Naive thymus-derived CD4-positive, alpha-beta T cell (primary cell): ENCODE measurements at regions of chr16 and their contacts with region 1.

Region 1: DNA sequence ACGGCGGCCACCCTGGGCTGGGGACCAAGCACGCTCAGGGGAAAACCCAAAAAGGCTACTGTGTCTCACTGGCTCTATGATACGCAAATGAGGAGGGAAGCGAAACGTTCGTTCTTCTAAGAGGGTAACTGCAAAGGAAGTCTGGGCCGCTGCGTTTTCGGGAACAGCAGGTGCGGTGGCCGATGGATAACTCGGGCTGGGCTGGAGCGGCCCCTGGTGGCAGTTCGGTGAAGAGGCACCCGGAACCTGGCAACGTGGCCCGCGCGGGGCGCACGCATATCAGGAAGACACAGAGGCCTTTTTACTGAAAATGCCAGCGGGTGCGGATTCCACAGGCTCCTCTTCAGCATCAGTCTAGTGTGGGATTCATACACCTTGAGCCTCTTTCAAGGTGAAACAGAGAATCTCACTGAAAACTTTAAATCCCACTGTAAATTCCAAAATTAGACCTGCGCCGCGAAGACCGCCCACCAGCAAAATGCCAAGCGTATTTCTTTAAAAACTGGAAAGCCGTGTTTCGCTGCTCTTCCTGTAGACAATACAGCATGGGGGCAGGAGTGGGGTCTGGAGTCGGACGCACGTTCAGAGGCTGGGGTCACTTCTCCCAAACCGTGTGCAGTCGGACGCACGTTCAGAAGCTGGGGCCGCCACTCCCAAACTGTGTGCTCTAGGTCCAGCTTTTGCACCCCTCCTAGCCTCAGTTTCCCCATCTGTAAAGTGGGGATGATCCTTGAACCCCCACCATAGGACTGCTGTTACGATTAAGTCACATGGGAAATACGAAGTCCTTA is 44.4 kb upstream of the METTL9 start:
- DNase-seq: peak; percentile 77 to 94 (median 90)
- ATAC-seq: peak; percentile 97
- H3K4me3 ChIP-seq: peak overlapping the region; percentile 36
- H3K4me3 Mint-ChIP-seq: peak overlapping the region; percentile 34 to 76 (median 64)
- H3K27ac ChIP-seq: no peak overlapping the region
- H3K27ac Mint-ChIP-seq: peak overlapping the region in 5 of 9 donors; percentile 20 to 58 (median 50)
- H3K4me1 ChIP-seq: peaks cover 6 to 7% of the 10 kb centered on the region in 2 donors
- H3K4me1 Mint-ChIP-seq: peaks cover 0 to 14% (median 9%) of the 10 kb centered on the region in 7 donors
- H3K27me3 ChIP-seq: no peaks in the 10 kb centered on the region
- H3K27me3 Mint-ChIP-seq: peaks cover 0 to 5% (median 5%) of the 10 kb centered on the region in 5 donors

Region 2: DNA sequence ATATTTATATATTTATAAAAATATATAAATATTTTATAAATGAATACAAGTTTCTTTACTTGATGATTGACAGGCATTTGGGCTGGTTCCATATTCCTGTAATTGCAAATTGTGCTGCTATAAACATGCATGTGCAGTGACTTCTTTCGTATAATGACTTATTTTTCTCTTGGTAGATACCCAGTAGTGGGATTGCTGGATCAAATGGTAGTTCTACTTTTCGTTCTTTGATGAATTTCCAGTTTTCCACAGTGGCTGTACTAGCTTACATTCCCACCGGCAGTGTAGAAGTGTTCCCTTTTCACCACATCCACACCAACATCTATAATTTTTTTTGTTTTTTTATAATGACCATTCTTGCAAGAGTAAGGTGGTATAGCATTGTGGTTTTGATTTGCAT is 986.6 kb before region 1 on chr16:
- CTCF ChIA-PET with region 1: no interaction called
- POLR2A ChIA-PET with region 1: no interaction called
- intact Hi-C with region 1: no loop called
- DNase-seq: no peak
- ATAC-seq: no peak
- H3K4me3 ChIP-seq: no peak overlapping the region
- H3K4me3 Mint-ChIP-seq: no peak overlapping the region
- H3K27ac ChIP-seq: no peak overlapping the region
- H3K27ac Mint-ChIP-seq: no peak overlapping the region
- H3K4me1 ChIP-seq: no peaks in the 10 kb centered on the region
- H3K4me1 Mint-ChIP-seq: no peaks in the 10 kb centered on the region
- H3K27me3 ChIP-seq: no peaks in the 10 kb centered on the region
- H3K27me3 Mint-ChIP-seq: peaks cover 0 to 12% (median 6%) of the 10 kb centered on the region in 5 donors

Region 3: GRCh38 chr16:21184834-21185233 is 370.2 kb before region 1 on chr16:
- CTCF ChIA-PET with region 1: no interaction called
- POLR2A ChIA-PET with region 1: no interaction called
- intact Hi-C with region 1: loop called (anchors 1 to 5 kb)
- DNase-seq: no peak
- ATAC-seq: peak; percentile 18
- H3K4me3 ChIP-seq: no peak overlapping the region
- H3K4me3 Mint-ChIP-seq: no peak overlapping the region
- H3K27ac ChIP-seq: no peak overlapping the region
- H3K27ac Mint-ChIP-seq: no peak overlapping the region
- H3K4me1 ChIP-seq: no peaks in the 10 kb centered on the region
- H3K4me1 Mint-ChIP-seq: peaks cover 0 to 5% (median 4%) of the 10 kb centered on the region in 7 donors
- H3K27me3 ChIP-seq: no peaks in the 10 kb centered on the region
- H3K27me3 Mint-ChIP-seq: peaks cover 0 to 3% (median 0%) of the 10 kb centered on the region in 5 donors

Region 4: DNA sequence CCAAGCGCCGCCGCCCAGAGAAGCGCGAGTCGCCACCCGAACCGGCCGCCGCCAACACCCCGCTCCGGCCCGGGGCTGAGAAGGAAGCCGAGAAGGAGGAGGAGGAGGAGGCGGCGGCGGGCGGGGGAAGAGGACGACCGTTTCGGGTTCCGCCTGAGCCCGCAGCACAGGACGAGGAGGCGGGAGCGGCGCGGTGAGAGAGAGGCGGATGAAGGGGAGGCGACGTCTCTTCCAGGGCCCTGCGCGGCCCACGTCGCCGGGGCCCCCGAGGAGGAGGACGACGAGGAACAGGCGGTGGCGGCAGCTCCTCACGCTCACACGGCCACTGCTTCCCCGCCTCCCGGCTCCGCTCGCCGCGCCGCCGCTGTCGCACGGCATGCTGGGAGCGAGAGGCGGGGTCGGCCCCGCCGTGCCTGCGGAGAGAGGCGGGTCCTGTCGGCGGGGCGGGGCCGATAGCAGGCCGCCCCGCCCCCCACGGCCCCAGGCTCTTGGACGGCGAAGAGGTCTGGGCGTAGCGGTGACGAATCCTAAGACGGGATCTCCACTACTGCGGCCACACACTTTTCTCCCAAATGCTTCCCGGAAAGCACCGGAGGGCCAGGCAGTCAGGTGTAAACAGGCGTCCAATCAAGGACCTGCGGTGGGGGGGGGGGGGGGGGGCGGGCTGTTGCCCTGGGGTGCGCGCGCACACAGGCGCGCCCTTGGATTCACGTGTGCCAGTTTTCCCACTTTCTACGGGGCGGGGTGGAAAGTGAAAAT is 52.9 kb before region 1 on chr16:
- CTCF ChIA-PET with region 1: no interaction called
- POLR2A ChIA-PET with region 1: no interaction called
- intact Hi-C with region 1: loop called in 1 of 2 experiments (anchors 10 kb)
- DNase-seq: peak; percentile 85 to 99 (median 96)
- ATAC-seq: peak; percentile 90
- H3K4me3 ChIP-seq: peak overlapping the region; percentile 91
- H3K4me3 Mint-ChIP-seq: peak overlapping the region; percentile 76 to 94 (median 86)
- H3K27ac ChIP-seq: peak overlapping the region; percentile 92
- H3K27ac Mint-ChIP-seq: peak overlapping the region; percentile 71 to 93 (median 89)
- H3K4me1 ChIP-seq: peaks cover 4 to 7% of the 10 kb centered on the region in 2 donors
- H3K4me1 Mint-ChIP-seq: peaks cover 11 to 26% (median 16%) of the 10 kb centered on the region in 7 donors
- H3K27me3 ChIP-seq: no peaks in the 10 kb centered on the region
- H3K27me3 Mint-ChIP-seq: no peaks in the 10 kb centered on the region

Region 5: GRCh38 chr16:21523411-21524067 is 31.5 kb before region 1 on chr16:
- CTCF ChIA-PET with region 1: no interaction called
- POLR2A ChIA-PET with region 1: no interaction called
- intact Hi-C with region 1: loop called in 1 of 2 experiments (anchors 1 kb)
- DNase-seq: no peak
- ATAC-seq: no peak
- H3K4me3 ChIP-seq: no peak overlapping the region
- H3K4me3 Mint-ChIP-seq: peak overlapping the region in 2 of 10 donors; percentile 29 to 56
- H3K27ac ChIP-seq: no peak overlapping the region
- H3K27ac Mint-ChIP-seq: no peak overlapping the region
- H3K4me1 ChIP-seq: no peaks in the 10 kb centered on the region
- H3K4me1 Mint-ChIP-seq: peaks cover 2 to 9% (median 6%) of the 10 kb centered on the region in 7 donors
- H3K27me3 ChIP-seq: no peaks in the 10 kb centered on the region
- H3K27me3 Mint-ChIP-seq: peaks cover 0 to 7% (median 0%) of the 10 kb centered on the region in 5 donors

Region 6: DNA sequence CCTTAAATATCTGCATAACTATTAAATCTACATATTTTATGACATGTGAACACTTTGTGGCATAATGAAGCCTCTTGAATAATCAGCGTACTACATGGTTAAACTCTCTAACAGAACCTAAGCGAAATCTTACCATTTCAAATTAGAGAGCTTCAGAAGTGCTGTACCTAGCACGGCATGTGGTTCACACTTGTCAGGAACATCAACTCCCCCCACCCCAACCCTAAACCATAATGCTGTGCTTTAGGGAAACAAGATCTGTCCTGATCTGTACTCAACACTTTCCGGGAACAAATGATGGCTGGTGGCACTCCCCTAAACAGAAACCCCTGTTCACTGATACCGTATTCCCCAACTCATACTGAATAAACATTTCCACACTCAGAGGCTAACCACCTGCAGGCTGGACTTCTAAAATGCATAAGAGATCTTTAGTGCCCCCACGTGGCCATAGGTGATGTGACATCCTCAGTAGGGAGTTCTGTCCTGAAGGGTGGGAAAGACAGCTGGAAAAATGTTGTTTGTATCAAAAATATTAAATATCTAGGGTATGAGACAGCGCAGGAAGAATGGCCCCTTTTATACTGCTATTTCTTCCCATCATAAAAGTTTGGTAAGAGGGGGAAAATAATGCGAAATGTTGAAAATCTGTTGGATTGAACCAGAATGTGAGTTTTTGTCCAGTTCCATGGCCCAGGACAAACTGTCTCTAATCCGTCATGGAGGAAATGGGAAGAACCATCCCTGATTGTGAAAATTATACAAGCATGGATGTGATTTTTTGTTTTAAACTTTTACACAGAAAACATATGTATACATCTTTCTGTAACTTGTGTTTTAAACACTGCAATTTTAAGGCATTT is 1505.7 kb after region 1 on chr16:
- CTCF ChIA-PET with region 1: interaction called, 6 read pairs
- POLR2A ChIA-PET with region 1: no interaction called
- intact Hi-C with region 1: loop called in 1 of 2 experiments (anchors 1 kb)
- DNase-seq: peak in 8 of 9 donors; percentile 9 to 48 (median 38)
- ATAC-seq: peak; percentile 74
- H3K4me3 ChIP-seq: no peak overlapping the region
- H3K4me3 Mint-ChIP-seq: no peak overlapping the region
- H3K27ac ChIP-seq: no peak overlapping the region
- H3K27ac Mint-ChIP-seq: no peak overlapping the region
- H3K4me1 ChIP-seq: no peaks in the 10 kb centered on the region
- H3K4me1 Mint-ChIP-seq: peaks cover 0 to 3% (median 0%) of the 10 kb centered on the region in 7 donors
- H3K27me3 ChIP-seq: no peaks in the 10 kb centered on the region
- H3K27me3 Mint-ChIP-seq: peaks cover 12 to 31% (median 16%) of the 10 kb centered on the region in 5 donors

Region 7: GRCh38 chr16:23435500-23435899 is 1880.5 kb after region 1 on chr16:
- CTCF ChIA-PET with region 1: no interaction called
- POLR2A ChIA-PET with region 1: no interaction called
- intact Hi-C with region 1: loop called in 1 of 2 experiments (anchors 10 kb)
- DNase-seq: peak; percentile 5 to 60 (median 48)
- ATAC-seq: peak; percentile 89
- H3K4me3 ChIP-seq: no peak overlapping the region
- H3K4me3 Mint-ChIP-seq: no peak overlapping the region
- H3K27ac ChIP-seq: no peak overlapping the region
- H3K27ac Mint-ChIP-seq: peak overlapping the region in 1 of 9 donors; percentile 53
- H3K4me1 ChIP-seq: no peaks in the 10 kb centered on the region
- H3K4me1 Mint-ChIP-seq: peaks cover 0 to 4% (median 0%) of the 10 kb centered on the region in 7 donors
- H3K27me3 ChIP-seq: no peaks in the 10 kb centered on the region
- H3K27me3 Mint-ChIP-seq: no peaks in the 10 kb centered on the region

Region 8: GRCh38 chr16:23510164-23510914 is 1955.3 kb after region 1 on chr16 and contains the start of gene GGA2:
- CTCF ChIA-PET with region 1: no interaction called
- POLR2A ChIA-PET with region 1: no interaction called
- intact Hi-C with region 1: no loop called
- DNase-seq: peak; percentile 61 to 84 (median 74)
- ATAC-seq: peak; percentile 96
- H3K4me3 ChIP-seq: peak within 1 kb of the TSS; percentile 73
- H3K4me3 Mint-ChIP-seq: peak within 1 kb of the TSS; percentile 86 to 99 (median 92)
- H3K27ac ChIP-seq: peak within 1 kb of the TSS; percentile 74
- H3K27ac Mint-ChIP-seq: peak within 1 kb of the TSS; percentile 78 to 94 (median 83)
- H3K4me1 ChIP-seq: peaks cover 36 to 50% of the 10 kb centered on the region in 2 donors
- H3K4me1 Mint-ChIP-seq: peaks cover 43 to 65% (median 56%) of the 10 kb centered on the region in 7 donors
- H3K27me3 ChIP-seq: no peaks in the 10 kb centered on the region
- H3K27me3 Mint-ChIP-seq: no peaks in the 10 kb centered on the region
- total RNA-seq, gene GGA2: 99.3 to 138 (median 104) TPM